ENCODE measurements at regions of chr9 and their contacts with region 1.

Region 1: DNA sequence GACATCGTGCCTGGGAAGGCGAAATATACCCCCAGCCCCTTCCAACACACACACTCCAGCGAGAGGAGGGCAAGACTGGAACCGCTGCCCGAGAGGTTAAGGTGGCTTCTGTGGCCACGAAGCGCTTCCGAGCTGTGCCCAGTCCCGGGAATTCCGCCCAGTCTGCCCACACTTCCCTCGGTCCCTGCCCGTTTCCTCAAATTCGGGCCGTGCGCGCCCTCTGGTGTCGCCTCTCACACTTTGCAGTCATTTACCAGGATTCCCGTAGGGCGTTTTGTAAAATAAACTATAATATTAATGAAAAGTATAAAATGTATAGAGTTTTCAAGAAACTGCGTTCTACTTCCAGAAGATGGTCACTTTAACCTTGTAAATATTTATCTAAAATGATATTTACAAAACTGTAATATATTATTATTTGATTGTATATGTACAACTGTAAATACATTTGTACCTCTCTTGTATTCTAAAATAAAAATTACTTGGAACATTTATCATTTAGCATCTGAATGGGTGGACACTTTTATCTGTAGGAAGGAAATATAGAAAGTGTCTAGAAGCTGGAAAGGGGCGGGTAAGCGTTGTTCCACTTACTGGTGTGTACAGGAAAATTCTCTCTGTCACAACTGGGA is 11.0 kb upstream of the EXOSC2 start:
- DNase-seq: peak; percentile 45 to 93
- H3K4me3 ChIP-seq: no peak overlapping the region
- CTCF ChIP-seq: no peak
- POLR2A ChIP-seq: no peak

Region 2: DNA sequence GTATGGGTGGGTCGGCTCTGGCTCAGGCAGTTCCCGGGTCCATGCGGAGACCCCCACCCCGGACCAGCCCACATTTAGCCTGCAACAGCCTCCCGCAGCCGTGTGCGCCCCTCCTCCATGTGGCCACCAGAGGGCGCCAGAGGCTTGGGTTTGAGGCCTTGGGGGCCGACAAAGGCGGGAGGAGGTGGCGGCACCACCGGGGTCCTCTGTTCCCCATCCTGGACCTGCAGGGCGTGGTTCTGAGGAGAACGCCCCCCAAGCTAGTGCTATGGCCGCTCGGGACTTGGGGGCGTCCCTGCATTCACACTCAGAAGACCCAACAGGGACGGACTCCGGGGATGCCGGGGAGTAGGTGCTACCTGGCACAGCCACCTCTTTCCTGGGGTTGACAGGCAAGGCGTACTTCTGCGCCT is 221.4 kb before region 1 on chr9:
- intact Hi-C with region 1: loop called (anchors 2 kb)
- DNase-seq: peak in 1 of 2 donors; percentile 92
- H3K4me3 ChIP-seq: no peak overlapping the region
- CTCF ChIP-seq: peak in 1 of 3 donors; percentile 82
- POLR2A ChIP-seq: no peak

Region 3: DNA sequence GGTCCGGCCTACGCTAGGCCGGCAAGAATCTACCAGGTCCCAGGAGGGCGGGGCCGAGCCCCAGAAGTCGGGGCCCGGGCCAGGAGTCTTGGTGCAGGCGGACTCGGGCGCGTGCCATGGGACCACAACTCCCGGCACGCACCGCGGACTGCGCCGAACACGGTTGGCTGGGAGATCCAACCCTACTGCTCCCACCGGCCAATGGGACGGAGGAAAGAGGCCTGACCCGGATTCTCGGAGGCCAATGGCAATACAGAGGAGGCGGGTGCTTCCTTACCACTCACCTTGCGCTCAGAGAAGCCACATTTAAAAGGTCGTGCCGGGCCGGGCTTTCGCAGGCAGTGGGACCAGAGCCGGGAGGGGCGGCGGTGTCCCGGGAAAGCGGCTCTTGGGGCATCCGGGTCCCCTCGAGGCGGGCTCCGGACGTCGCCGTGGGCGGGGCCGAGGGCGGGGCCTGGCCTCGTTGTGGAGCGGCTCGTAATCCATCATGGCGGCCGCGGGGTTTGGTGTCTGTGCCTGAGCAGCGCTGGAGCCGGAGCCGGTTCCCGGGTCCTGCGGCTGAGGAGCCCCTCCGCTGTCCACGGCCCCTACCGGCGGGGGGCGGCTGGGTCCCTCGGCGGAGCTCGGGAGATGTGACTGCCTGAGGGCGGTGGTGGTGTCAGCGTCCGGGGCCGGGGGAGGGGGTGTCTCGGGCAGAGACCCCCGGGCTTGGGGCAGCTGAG is 30.1 kb after region 1 on chr9:
- intact Hi-C with region 1: no loop called
- DNase-seq: peak; percentile 97 to 99
- H3K4me3 ChIP-seq: peak overlapping the region; percentile 93
- CTCF ChIP-seq: no peak
- POLR2A ChIP-seq: no peak

Region 4: DNA sequence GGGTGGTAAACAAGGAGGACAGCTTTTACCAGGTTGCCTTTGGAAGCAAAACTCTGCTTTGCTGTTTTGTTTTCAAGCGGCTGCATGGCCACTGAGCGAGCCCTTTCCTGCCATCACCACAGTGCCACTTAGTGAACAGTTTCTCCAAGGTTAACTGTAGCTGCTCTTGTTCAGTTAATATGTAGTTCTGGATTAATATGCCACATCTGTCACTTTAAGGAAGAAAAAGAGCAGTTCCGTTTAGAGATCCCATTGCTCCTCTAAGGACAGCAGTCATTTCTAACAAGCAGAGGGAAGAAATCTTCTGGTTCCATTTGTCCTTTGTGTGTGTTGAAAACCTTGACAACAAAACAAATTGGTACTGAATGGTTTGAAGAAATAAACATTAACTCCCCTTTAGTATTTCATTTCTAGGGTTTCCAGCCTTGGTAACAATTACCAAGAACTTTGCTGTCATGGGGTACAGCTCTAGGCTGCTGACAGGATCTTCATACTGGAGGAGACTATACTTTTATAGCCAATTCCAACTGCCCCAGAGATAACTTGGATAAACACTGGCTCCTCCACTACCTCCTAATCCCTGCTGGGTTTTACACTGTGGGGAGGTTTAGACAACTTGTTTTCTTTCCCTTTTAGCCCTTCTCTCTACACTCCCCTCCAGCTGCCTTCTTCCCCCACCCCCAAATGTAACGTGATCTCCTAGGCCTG is 142.2 kb after region 1 on chr9:
- intact Hi-C with region 1: no loop called
- DNase-seq: no peak
- H3K4me3 ChIP-seq: no peak overlapping the region
- CTCF ChIP-seq: no peak
- POLR2A ChIP-seq: no peak

Measured in lower leg skin (tissue), 4 donors.